GM13976 (cell line): ENCODE measurements at regions of chr17 and their contacts with region 1.

Region 1: GRCh38 chr17:37791447-37792399 is 46.9 kb upstream of the HNF1B start:
- DNase-seq: peak; percentile 74
- CTCF ChIP-seq: peak; percentile 62

Region 2: DNA sequence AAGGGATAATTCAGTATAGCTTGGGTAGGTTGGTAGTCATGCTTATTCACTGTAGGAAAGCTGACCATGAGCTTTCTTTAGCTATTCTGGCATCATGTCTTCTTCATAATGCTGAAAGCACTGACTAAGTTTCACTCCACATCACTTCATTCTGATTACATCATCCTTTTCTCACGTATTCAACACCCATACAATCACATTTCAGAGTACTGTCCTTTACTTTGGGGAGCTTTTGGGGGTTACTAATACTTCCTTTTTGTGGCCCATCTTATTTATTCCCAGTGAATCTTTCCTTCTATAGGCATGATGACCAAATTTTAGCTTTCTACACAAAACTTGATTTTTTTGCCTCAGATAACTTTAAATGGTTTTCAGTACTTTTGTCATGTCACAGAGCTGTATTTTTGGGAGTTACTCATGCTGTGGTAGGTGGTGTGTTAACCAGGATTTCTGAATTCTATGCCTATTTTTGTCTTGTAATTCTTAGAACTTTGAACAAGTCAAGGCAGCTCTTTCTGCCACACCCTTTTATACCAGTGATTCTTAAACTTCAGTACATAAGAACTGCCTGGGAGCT is 361.6 kb before region 1 on chr17:
- in situ Hi-C with region 1: no loop called
- DNase-seq: peak; percentile 58
- CTCF ChIP-seq: no peak

Region 3: GRCh38 chr17:37637956-37638355 is 153.8 kb before region 1 on chr17:
- in situ Hi-C with region 1: loop called (anchors 10 kb)
- DNase-seq: no peak
- CTCF ChIP-seq: no peak

Region 4: GRCh38 chr17:37701496-37701898 is 90.2 kb before region 1 on chr17:
- in situ Hi-C with region 1: loop called (anchors 5 kb)
- DNase-seq: peak; percentile 77
- CTCF ChIP-seq: peak; percentile 69

Region 5: DNA sequence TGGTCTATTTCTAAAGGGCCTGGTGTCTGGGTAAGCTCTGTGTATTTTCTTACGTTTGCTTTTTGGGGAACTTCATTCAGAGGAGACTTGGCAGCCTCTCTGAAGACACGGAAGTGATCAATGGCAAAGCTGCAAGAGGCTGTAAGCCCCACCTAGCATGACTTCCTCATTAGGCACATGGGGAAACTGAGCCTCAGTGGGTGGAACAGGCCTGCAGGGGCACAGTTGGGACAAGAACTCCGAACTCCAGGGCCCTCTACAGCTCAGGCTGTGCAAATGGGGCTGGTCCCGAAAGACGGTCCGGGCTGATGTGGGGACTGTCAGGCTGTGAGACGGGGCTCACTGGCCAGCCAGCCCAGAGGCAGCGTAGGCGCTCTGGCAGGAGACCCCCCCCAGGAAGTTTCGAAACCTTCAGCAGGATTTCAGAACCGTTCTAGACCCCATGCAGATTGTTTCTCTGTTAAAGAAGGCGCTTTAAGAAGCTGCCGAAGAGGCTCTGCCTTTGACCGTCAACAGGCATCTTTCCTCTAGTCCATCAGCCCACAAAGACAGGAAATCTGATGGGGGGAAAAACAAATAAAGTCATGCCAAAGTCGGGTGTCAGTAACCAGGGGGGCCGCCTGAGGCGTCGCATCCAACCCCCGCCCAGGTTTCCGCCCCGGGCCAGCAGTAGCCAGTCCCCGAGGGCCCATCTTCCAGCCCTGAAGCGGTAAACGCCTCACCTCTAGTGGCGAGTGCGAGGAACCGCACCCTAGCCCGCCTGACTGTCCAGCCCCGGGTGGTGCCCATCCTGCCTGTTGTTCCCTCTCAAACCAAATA is 52.6 kb after region 1 on chr17:
- in situ Hi-C with region 1: no loop called
- DNase-seq: peak; percentile 86
- CTCF ChIP-seq: peak; percentile 96